H1 (cell line): ENCODE measurements at regions of chr3 and their contacts with region 1.

Region 1: GRCh38 chr3:179768080-179768479 is 115.2 kb downstream of the USP13 start:
- DNase-seq: peak in 1 of 2 experiments; percentile 58
- H3K4me3 ChIP-seq: no peak overlapping the region
- H3K27ac ChIP-seq: no peak overlapping the region
- H3K4me1 ChIP-seq: peaks cover 1 to 13% (median 3%) of the 10 kb centered on the region in 4 experiments; a peak in 6 of 7 replicates
- H3K27me3 ChIP-seq: no peaks in the 10 kb centered on the region
- CTCF ChIP-seq: peak; percentile 59 to 84 (median 72)
- EP300 ChIP-seq: no peak
- POLR2A ChIP-seq: no peak
- RAD21 ChIP-seq: peak; percentile 84 to 87

Region 2: DNA sequence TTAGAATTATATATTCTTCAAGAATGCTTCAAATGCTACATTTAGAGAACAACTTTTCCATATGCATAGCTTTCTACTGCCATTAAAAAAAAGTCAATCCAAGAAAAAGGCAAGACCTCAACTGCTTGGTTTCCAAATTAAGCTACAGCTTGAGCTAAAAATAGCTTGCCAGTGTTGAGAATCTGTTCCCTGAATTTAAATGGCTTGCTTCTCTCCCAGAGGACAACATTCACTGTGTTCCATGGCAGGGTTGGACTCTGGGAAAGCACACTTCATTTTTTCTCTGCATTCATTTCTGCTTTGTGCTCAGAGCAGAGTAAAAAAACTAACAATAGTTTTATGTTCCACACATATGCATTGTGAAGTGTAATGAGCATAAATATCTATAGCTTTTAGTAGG is 255.7 kb before region 1 on chr3:
- CTCF ChIA-PET with region 1: no interaction called
- POLR2A ChIA-PET with region 1: no interaction called
- DNase-seq: no peak
- H3K4me3 ChIP-seq: no peak overlapping the region
- H3K27ac ChIP-seq: no peak overlapping the region
- H3K4me1 ChIP-seq: no peaks in the 10 kb centered on the region
- H3K27me3 ChIP-seq: no peaks in the 10 kb centered on the region
- CTCF ChIP-seq: no peak
- EP300 ChIP-seq: no peak
- POLR2A ChIP-seq: no peak
- RAD21 ChIP-seq: no peak

Region 3: GRCh38 chr3:179750720-179751328 is 17.3 kb before region 1 on chr3:
- CTCF ChIA-PET with region 1: interaction called, 14 read pairs
- POLR2A ChIA-PET with region 1: no interaction called
- DNase-seq: no peak
- H3K4me3 ChIP-seq: no peak overlapping the region
- H3K27ac ChIP-seq: no peak overlapping the region
- H3K4me1 ChIP-seq: no peaks in the 10 kb centered on the region
- H3K27me3 ChIP-seq: no peaks in the 10 kb centered on the region; a peak in 1 of 7 replicates
- CTCF ChIP-seq: peak; percentile 27 to 55 (median 38); a peak in 3 of 4 replicates
- EP300 ChIP-seq: no peak
- POLR2A ChIP-seq: no peak
- RAD21 ChIP-seq: peak; percentile 33 to 47